Adrenal gland (tissue), 19 donors: ENCODE measurements at regions of chr15 and their contacts with region 1.

Region 1: DNA sequence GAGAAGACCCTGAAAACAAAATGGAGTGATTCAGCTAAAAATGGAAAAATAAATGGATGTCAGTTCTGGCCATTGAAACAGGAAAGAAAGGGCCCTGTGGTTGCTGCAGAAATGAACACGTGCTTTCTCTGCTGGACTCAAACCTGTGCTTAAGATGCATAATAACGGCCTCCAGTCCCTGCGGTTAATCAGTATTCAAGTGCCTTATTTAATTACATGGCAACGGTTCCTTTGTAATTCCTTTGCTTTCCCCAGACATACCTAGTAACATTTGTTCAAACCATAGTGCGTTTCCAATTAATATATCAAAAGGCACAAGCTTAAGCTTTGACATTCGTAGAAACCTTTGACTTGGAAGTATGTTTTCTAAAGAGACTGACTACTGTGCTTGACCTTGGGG is 428.3 kb downstream of the GABRG3 start:
- DNase-seq: no peak
- H3K4me3 ChIP-seq: no peak overlapping the region
- H3K27ac ChIP-seq: no peak overlapping the region
- H3K4me1 ChIP-seq: no peaks in the 10 kb centered on the region
- H3K27me3 ChIP-seq: no peaks in the 10 kb centered on the region
- CTCF ChIP-seq: no peak
- POLR2A ChIP-seq: no peak

Region 2: DNA sequence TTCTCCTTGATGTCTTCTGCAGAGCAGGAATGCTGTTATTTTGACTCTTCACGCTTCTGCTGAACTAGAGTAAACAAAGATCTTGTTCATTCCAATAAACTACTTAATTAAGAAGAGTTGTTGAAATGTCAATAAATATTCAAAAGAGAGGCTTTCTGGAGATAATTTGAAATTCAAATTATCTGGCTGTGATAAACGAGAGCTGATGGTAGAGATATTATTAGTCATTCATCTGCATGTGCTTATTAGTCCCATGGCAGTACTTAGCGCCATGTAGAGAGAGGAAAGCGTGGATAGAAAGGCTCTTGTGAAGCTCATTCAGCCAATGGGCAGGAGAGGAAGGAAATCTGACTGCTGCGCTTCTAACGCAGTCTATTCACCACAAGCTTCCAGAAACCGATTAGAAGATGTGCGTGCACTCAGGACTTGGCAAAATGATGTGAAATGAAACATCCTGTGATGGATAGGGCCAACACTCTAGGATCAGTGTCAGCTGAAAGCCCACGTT is 877.5 kb before region 1 on chr15:
- intact Hi-C with region 1: no loop called
- DNase-seq: no peak
- H3K4me3 ChIP-seq: no peak overlapping the region
- H3K27ac ChIP-seq: no peak overlapping the region
- H3K4me1 ChIP-seq: no peaks in the 10 kb centered on the region
- H3K27me3 ChIP-seq: no peaks in the 10 kb centered on the region
- CTCF ChIP-seq: no peak
- POLR2A ChIP-seq: no peak

Region 3: GRCh38 chr15:27124287-27124871 is 274.9 kb before region 1 on chr15:
- intact Hi-C with region 1: loop called in 1 of 2 experiments (anchors 10 kb)
- DNase-seq: no peak
- H3K4me3 ChIP-seq: no peak overlapping the region
- H3K27ac ChIP-seq: no peak overlapping the region
- H3K4me1 ChIP-seq: no peaks in the 10 kb centered on the region
- H3K27me3 ChIP-seq: no peaks in the 10 kb centered on the region
- CTCF ChIP-seq: no peak
- POLR2A ChIP-seq: no peak

Region 4: GRCh38 chr15:27317736-27318135 is 81.5 kb before region 1 on chr15:
- intact Hi-C with region 1: no loop called
- DNase-seq: no peak
- H3K4me3 ChIP-seq: no peak overlapping the region
- H3K27ac ChIP-seq: no peak overlapping the region
- H3K4me1 ChIP-seq: no peaks in the 10 kb centered on the region
- H3K27me3 ChIP-seq: no peaks in the 10 kb centered on the region
- CTCF ChIP-seq: no peak
- POLR2A ChIP-seq: no peak

Region 5: GRCh38 chr15:27448986-27449385 is 49.7 kb after region 1 on chr15:
- intact Hi-C with region 1: loop called in 1 of 2 experiments (anchors 10 kb)
- DNase-seq: no peak
- H3K4me3 ChIP-seq: no peak overlapping the region
- H3K27ac ChIP-seq: no peak overlapping the region
- H3K4me1 ChIP-seq: no peaks in the 10 kb centered on the region
- H3K27me3 ChIP-seq: no peaks in the 10 kb centered on the region
- CTCF ChIP-seq: no peak
- POLR2A ChIP-seq: no peak